HCT116 (cell line): ENCODE measurements at regions of chr1 and their contacts with region 1.

Region 1: GRCh38 chr1:167066333-167067122 is 23.6 kb downstream of the GPA33 start:
- DNase-seq: peak; percentile 35
- ATAC-seq: peak; percentile 97
- H3K4me3 ChIP-seq: peak overlapping the region in 1 of 2 experiments; percentile 26; a peak in 2 of 4 replicates
- H3K27ac ChIP-seq: no peak overlapping the region
- H3K4me1 ChIP-seq: peaks cover 0 to 8% of the 10 kb centered on the region in 2 experiments; a peak in 2 of 4 replicates
- H3K27me3 ChIP-seq: no peaks in the 10 kb centered on the region
- CTCF ChIP-seq: peak; percentile 89 to 97 (median 95)
- POLR2A ChIP-seq: no peak
- RAD21 ChIP-seq: peak; percentile 100

Region 2: DNA sequence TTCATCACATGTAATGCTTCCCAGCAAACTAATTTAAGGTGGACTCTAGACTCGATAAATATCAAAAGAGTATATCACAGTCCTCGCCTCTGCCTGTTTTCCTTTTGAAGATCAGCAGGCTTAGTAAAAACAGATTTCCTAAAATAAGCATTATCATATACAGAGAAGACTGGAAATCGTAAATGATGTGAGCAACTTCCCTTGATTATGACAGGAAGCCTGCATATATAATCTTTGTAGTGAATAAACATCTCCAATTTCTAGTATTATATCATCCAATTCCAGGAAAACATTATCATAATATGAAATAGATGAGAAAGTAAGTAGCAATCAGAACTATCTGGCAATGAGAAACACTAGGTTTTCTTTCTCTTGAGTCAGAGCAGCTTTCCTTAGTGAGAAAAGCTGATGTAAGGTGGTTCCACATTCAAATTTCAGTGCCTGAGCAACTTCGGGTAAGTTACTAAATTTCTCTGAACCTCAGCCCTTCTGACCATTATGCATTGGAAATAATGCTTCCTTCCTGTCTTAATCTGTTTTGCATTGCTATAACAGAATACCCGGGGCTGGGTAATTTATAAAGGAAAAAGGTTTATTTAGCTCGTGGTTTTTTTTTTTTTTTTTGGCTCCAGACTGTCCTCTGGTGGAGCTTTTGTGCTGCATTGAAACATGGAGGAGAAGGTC is 141.6 kb after region 1 on chr1:
- CTCF ChIA-PET with region 1: no interaction called
- POLR2A ChIA-PET with region 1: no interaction called
- RAD21 ChIA-PET with region 1: interaction called in 1 of 2 experiments, 3 read pairs
- intact Hi-C with region 1: loop called (anchors 2 kb)
- DNase-seq: no peak
- ATAC-seq: peak; percentile 62
- H3K4me3 ChIP-seq: no peak overlapping the region
- H3K27ac ChIP-seq: no peak overlapping the region
- H3K4me1 ChIP-seq: no peaks in the 10 kb centered on the region
- H3K27me3 ChIP-seq: no peaks in the 10 kb centered on the region
- CTCF ChIP-seq: peak; percentile 31 to 57 (median 46); a peak in 5 of 6 replicates
- POLR2A ChIP-seq: no peak
- RAD21 ChIP-seq: peak; percentile 44

Region 3: GRCh38 chr1:167268398-167268787 is 201.9 kb after region 1 on chr1:
- CTCF ChIA-PET with region 1: no interaction called
- POLR2A ChIA-PET with region 1: no interaction called
- RAD21 ChIA-PET with region 1: no interaction called
- intact Hi-C with region 1: loop called (anchors 5 kb)
- DNase-seq: no peak
- ATAC-seq: no peak
- H3K4me3 ChIP-seq: no peak overlapping the region
- H3K27ac ChIP-seq: no peak overlapping the region
- H3K4me1 ChIP-seq: peaks cover 8 to 21% of the 10 kb centered on the region in 2 experiments
- H3K27me3 ChIP-seq: no peaks in the 10 kb centered on the region
- CTCF ChIP-seq: no peak
- POLR2A ChIP-seq: no peak
- RAD21 ChIP-seq: no peak

Region 4: DNA sequence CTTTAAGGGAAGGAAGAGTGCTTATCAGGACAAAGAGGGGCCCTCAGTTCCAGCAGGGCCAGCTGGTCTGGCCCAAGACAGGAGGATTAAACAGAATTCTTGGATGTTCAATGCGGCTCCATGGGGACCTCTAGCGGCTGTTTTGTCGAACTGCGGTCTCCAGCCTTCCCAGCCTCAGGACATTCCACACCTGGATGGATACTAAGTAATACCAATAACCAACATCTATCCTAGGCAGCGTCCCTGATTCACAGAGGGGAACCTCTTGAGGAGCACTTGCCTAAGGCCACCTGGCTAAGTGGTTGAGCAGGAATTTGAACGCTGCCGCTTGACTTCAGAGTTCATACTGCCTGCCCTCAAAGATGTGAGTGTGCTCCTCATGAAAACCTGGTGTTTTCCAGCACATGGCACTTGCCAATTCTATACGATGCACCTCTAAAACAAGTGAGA is 467.3 kb after region 1 on chr1:
- CTCF ChIA-PET with region 1: interaction called, 5 read pairs
- POLR2A ChIA-PET with region 1: no interaction called
- RAD21 ChIA-PET with region 1: no interaction called
- intact Hi-C with region 1: loop called (anchors 2 kb)
- DNase-seq: peak; percentile 48
- ATAC-seq: peak; percentile 92
- H3K4me3 ChIP-seq: no peak overlapping the region
- H3K27ac ChIP-seq: no peak overlapping the region
- H3K4me1 ChIP-seq: no peaks in the 10 kb centered on the region
- H3K27me3 ChIP-seq: no peaks in the 10 kb centered on the region; the same call in 1 of the 2 replicates
- CTCF ChIP-seq: peak; percentile 66 to 94 (median 88)
- POLR2A ChIP-seq: no peak
- RAD21 ChIP-seq: peak; percentile 86